ENCODE measurements at regions of chr3 and their contacts with region 1.

Region 1: DNA sequence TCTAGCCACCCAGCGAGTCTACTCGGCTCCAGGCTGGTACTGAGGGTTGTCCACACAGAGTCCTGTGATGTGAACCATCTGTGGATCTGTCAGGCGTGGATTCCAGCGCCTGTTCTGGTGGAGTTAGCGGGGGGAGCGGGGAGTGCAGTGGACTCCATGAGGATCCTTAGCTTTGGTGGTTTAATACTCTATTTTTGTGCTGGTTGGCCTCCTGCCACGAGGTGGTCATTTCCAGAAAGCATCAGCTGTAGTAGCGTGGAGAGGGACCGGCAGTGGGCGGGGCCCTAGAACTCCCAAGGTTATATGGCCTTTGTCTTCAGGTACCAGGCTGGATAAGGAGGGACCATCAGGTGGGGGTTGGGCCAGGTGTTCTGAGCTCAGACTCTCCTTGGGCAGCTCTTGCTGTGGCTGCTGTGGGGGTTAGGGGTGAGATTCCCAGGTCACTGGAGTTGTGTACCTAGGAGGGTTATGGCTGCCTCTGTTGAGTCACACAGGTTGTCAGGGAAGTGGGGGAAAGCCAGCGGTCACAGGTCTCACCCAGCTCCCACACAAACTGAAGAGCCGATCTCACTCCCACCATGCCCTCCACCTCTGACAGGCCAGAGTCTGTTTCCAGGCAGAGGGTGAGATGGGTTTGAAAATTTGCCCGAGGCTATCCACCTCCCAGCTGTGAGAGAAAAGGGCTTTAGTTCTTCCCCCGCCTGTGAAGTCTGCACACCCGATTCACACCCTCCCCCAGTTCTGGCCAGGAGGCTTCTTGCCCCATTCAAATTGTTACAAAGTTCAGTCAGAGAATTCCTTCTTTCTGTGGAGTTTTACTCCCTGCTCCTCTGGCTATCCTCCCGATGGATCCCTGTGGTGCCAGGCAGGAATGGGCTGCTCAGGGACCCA is 446.7 kb downstream of the EDEM1 start:
- DNase-seq: no peak
- ATAC-seq: no peak
- H3K4me3 ChIP-seq: no peak overlapping the region
- H3K4me3 Mint-ChIP-seq: no peak overlapping the region
- H3K27ac ChIP-seq: no peak overlapping the region
- H3K27ac Mint-ChIP-seq: no peak overlapping the region
- H3K4me1 ChIP-seq: no peaks in the 10 kb centered on the region
- H3K4me1 Mint-ChIP-seq: no peaks in the 10 kb centered on the region
- H3K27me3 ChIP-seq: no peaks in the 10 kb centered on the region
- H3K27me3 Mint-ChIP-seq: no peaks in the 10 kb centered on the region
- CTCF ChIP-seq: no peak

Region 2: GRCh38 chr3:5068531-5069050 is 565.6 kb before region 1 on chr3:
- CTCF ChIA-PET with region 1: no interaction called
- POLR2A ChIA-PET with region 1: no interaction called
- intact Hi-C with region 1: no loop called
- DNase-seq: no peak
- ATAC-seq: no peak
- H3K4me3 ChIP-seq: no peak overlapping the region
- H3K4me3 Mint-ChIP-seq: no peak overlapping the region
- H3K27ac ChIP-seq: no peak overlapping the region
- H3K27ac Mint-ChIP-seq: no peak overlapping the region
- H3K4me1 ChIP-seq: no peaks in the 10 kb centered on the region
- H3K4me1 Mint-ChIP-seq: no peaks in the 10 kb centered on the region
- H3K27me3 ChIP-seq: peaks cover 0 to 3% of the 10 kb centered on the region in 2 experiments
- H3K27me3 Mint-ChIP-seq: no peaks in the 10 kb centered on the region
- CTCF ChIP-seq: no peak

Region 3: GRCh38 chr3:5616873-5617272 is 17.3 kb before region 1 on chr3:
- CTCF ChIA-PET with region 1: no interaction called
- POLR2A ChIA-PET with region 1: no interaction called
- intact Hi-C with region 1: loop called in 1 of 2 experiments (anchors 1 kb)
- DNase-seq: no peak
- ATAC-seq: no peak
- H3K4me3 ChIP-seq: no peak overlapping the region
- H3K4me3 Mint-ChIP-seq: no peak overlapping the region
- H3K27ac ChIP-seq: no peak overlapping the region
- H3K27ac Mint-ChIP-seq: no peak overlapping the region
- H3K4me1 ChIP-seq: no peaks in the 10 kb centered on the region
- H3K4me1 Mint-ChIP-seq: no peaks in the 10 kb centered on the region
- H3K27me3 ChIP-seq: no peaks in the 10 kb centered on the region
- H3K27me3 Mint-ChIP-seq: no peaks in the 10 kb centered on the region
- CTCF ChIP-seq: no peak

Measured in CD4-positive, alpha-beta T cell (primary cell).